ENCODE measurements at regions of chr12 and their contacts with region 1.

Region 1: DNA sequence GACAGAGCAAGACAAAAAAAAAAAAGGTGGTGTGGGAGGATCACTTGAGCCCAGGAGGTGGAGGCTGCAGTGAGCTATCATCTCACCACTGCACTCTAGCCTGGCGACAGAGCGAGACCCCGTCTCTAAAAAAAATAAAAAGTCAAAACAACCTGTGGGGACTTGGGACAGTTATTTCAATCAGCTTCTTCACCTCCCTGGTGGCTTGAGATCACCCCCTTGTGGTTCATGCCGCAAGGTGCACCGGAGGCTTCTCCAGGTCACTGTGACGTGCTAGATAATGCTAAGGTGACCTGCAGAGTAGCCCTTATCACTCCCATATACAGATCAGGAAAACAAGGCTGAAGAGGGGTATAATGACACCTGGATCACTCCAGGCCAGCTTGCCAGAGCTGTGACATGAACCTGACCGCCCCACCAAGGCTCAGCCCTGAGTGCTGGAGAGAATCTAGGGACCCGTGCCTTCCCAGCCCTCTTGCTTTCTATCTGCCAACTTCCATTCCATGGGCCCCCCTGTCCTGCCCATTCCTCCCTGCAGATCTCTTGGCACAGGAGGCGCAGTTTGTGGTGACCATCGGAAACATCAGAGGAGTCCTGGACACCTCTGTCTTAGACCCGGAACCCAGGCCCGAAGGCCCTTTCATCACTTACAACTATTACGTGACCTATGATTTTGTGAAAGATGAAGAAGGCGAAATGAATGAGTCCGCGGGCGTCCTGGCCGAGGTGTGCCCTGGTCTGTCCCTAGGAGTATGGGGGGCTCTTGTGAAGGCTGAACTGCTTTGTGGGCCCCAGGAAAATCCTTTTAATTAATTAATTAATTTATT is 8.1 kb downstream of the LRRC43 start:
- DNase-seq: peak; percentile 86
- CTCF ChIP-seq: peak; percentile 87

Region 2: DNA sequence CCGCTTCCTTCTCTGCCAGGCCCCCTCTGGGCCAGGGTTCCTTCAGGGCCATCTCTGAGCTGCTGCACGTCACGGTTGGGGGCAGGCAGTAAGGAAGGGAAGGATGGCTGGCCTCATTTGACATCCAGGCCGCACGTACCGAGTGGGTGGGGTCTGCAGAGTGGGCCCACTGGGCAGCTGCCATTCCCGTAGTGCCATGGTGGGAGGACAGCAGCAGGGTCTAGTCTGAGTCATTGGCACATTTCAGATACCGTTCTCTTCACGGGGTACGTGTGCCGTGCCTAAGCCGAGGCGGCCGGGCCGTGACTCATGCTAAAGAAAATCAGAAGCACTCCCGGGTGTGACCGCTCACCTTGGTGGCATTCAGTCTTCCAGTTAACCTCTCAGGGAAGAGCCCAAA is 60.9 kb before region 1 on chr12:
- CTCF ChIA-PET with region 1: interaction called, 73 read pairs
- POLR2A ChIA-PET with region 1: no interaction called
- DNase-seq: no peak
- CTCF ChIP-seq: no peak

Region 3: DNA sequence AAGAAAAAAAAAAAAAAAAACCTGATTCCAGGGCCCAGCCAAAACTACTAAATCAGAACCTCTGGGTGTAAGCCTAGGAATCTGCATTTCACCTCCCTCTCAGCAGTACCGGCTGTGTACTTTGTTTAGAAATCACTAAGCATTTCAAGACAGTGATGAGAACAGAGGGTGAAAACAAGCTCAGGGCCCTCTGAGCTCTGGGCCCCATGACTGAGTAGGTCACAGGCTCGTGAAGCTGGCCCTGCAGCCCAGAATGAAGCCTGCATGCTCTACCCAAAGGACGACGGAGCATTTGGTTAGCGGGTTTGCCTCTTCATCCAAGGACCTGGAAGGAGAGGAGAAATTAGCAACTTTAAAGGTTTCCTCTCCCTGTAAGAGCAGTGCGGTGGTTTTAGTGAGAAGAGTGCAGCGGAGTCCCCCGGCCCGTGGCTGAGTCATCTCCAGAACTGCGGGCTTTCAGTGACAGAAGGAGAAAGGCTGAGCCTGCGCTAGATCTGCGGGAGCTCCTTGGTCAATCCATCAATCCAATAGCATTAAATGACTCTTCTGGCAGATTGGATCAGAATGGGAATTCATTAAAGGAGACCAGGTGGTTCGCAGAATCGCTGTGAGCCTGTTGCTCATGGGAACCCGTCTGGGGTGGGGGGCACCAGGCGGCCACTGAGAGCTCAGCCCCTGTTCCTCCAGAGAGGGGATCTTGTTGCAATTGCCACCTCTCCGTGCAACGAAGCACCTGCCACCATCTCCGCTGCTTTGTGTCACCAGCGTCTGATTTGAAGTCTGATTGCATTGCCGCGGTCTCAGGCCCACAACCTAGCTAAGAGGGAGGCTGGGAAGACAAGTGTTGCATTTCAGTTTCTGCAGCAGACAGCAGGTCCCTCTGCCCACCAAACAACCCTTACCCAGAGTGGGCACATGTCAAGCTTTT is 24.4 kb before region 1 on chr12:
- CTCF ChIA-PET with region 1: interaction called, 21 read pairs
- POLR2A ChIA-PET with region 1: no interaction called
- DNase-seq: peak; percentile 68
- CTCF ChIP-seq: no peak

Region 4: GRCh38 chr12:122203301-122204166 is 12.5 kb after region 1 on chr12 and contains the start of gene B3GNT4:
- CTCF ChIA-PET with region 1: interaction called, 20 read pairs
- POLR2A ChIA-PET with region 1: no interaction called
- DNase-seq: peak; percentile 73
- CTCF ChIP-seq: no peak

Region 5: DNA sequence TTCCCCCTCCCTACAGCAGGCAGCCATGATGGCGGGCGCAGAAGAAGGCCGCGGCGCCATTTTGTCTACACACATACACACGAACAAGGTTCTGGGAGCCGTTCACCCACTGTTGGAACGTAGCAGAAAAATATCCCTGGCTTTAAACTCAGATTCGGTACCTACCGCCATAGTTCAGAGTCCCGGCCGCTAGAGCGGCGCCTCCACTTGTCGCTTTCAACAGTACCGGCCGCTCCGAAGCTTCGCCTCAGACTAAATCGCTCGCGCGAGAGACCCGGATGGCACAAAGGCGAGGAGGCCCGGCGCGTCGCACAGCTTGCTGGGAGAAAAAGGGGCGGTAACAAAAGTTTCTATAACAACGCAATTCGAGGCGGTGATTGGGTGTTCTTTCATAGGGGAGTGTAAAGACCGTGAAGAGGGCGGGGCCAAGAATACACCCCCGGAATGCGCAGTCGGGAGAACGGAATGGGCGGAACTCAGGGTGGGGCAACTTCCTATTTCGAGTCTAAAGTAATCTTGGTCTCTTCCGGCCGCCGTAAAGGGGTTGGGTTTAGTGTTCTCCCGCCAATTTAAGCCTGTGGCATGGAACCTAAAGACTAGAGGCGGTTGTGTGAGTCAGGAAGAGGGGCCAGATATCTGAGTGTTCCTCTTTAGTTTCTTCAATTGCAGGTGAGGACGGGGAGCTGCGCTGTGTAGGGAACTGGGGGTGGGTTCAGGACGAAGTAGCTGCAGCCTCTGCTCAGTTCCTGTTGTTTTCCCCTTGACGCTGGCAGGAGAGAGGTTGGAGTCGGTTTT is 335.8 kb after region 1 on chr12 and contains the starts of genes KNTC1 and RSRC2:
- CTCF ChIA-PET with region 1: no interaction called
- POLR2A ChIA-PET with region 1: no interaction called
- DNase-seq: peak; percentile 97
- CTCF ChIP-seq: no peak